ENCODE measurements at regions of chr15 and their contacts with region 1.

Region 1: DNA sequence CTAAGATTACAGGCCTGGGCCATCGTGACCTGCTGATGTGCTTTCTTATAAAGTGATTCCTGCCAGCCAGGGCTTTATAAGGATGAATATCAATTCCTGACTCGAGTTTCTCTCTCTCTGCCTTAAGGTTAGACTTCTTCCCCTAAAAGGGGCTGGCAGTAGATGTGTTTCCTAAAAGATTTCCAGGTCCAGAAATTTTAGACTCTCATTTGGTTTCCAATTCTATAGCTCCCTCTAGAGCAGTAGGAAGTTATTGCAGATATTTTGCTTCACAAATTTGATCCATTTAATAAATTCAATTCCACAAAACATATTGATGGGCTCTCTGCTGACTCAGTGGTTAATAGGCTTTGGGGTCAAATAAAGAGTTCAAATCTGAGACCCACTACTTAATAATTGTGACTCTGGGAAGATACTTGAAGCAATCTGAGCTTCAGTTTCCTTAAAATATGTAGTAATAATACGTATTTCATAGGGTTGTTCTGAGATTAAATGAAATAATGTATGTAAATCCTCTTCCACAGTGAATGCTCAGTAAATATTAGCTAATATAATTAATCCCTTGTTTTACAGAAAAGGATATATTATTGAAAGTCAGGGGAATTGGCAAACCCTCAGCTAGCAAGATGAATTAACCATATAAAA is 2.1 kb downstream of the TRIM69 start:
- H3K4me3 ChIP-seq: no peak overlapping the region
- H3K27ac ChIP-seq: no peak overlapping the region
- H3K4me1 ChIP-seq: no peaks in the 10 kb centered on the region
- CTCF ChIP-seq: no peak

Region 2: GRCh38 chr15:44593042-44593736 is 145.3 kb before region 1 on chr15:
- CTCF ChIA-PET with region 1: interaction called, 13 read pairs
- POLR2A ChIA-PET with region 1: interaction called, 3 read pairs
- H3K4me3 ChIP-seq: no peak overlapping the region
- H3K27ac ChIP-seq: no peak overlapping the region
- H3K4me1 ChIP-seq: no peaks in the 10 kb centered on the region
- CTCF ChIP-seq: no peak

Region 3: GRCh38 chr15:44663409-44664308 is 74.8 kb before region 1 on chr15 and contains the start of gene SPG11:
- CTCF ChIA-PET with region 1: interaction called, 64 read pairs
- POLR2A ChIA-PET with region 1: interaction called, 7 read pairs
- H3K4me3 ChIP-seq: peak within 1 kb of the TSS; percentile 93
- H3K27ac ChIP-seq: peak within 1 kb of the TSS; percentile 63; the same call in 1 of the 2 replicates
- H3K4me1 ChIP-seq: no peaks in the 10 kb centered on the region
- CTCF ChIP-seq: peak; percentile 97

Region 4: GRCh38 chr15:44910981-44911625 is 172.6 kb after region 1 on chr15:
- CTCF ChIA-PET with region 1: no interaction called
- POLR2A ChIA-PET with region 1: no interaction called
- H3K4me3 ChIP-seq: no peak overlapping the region
- H3K27ac ChIP-seq: no peak overlapping the region
- H3K4me1 ChIP-seq: no peaks in the 10 kb centered on the region
- CTCF ChIP-seq: no peak